ENCODE measurements at regions of chr11 and their contacts with region 1.

Region 1: DNA sequence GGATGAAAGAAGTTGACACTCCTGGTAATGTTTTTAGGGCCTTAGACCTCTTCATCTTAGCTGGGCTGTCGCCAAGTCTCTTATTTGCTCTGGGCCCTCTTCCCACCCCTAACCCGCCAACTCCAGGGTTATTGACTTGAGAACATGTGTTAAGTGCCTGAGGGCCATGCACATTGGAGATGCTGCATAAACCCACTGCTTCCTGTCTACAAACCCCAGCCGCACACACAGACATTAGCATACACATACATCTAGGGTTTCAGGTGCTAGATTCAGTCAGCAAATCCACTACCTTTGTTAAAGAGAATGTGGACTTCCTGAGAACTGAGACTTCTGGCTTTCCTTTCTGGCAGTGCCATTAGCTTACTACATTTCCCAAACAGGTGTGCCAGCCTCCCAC is 817 bp downstream of the PANX3 start:
- DNase-seq: peak in 5 of 35 experiments; percentile 1 to 25 (median 5)
- ATAC-seq: peak; percentile 58 to 80 (median 70)
- H3K4me3 ChIP-seq: no peak overlapping the region
- H3K4me3 Mint-ChIP-seq: no peak overlapping the region
- H3K27ac ChIP-seq: no peak overlapping the region
- H3K27ac Mint-ChIP-seq: peak overlapping the region in 1 of 2 donors; percentile 80
- H3K4me1 ChIP-seq: peaks cover 0 to 4% of the 10 kb centered on the region in 2 experiments
- H3K4me1 Mint-ChIP-seq: peaks cover 7 to 8% (median 8%) of the 10 kb centered on the region in 3 donors
- H3K27me3 ChIP-seq: no peaks in the 10 kb centered on the region
- H3K27me3 Mint-ChIP-seq: peaks cover 6 to 8% of the 10 kb centered on the region in 2 donors

Region 2: GRCh38 chr11:124481365-124482323 is 130.4 kb before region 1 on chr11:
- CTCF ChIA-PET with region 1: no interaction called
- POLR2A ChIA-PET with region 1: no interaction called
- DNase-seq: no peak
- ATAC-seq: peak in 3 of 4 experiments; percentile 37 to 50 (median 38)
- H3K4me3 ChIP-seq: peak overlapping the region in 1 of 2 donors; percentile 12
- H3K4me3 Mint-ChIP-seq: peak overlapping the region; percentile 19 to 51 (median 44)
- H3K27ac ChIP-seq: no peak overlapping the region
- H3K27ac Mint-ChIP-seq: peak overlapping the region in 1 of 2 donors; percentile 24
- H3K4me1 ChIP-seq: no peaks in the 10 kb centered on the region
- H3K4me1 Mint-ChIP-seq: peaks cover 9 to 12% (median 12%) of the 10 kb centered on the region in 3 donors
- H3K27me3 ChIP-seq: peaks cover 0 to 7% of the 10 kb centered on the region in 2 experiments
- H3K27me3 Mint-ChIP-seq: peaks cover 23 to 29% of the 10 kb centered on the region in 2 donors

Region 3: GRCh38 chr11:124622531-124623451 is 10.7 kb after region 1 on chr11 and contains the start of gene TBRG1:
- CTCF ChIA-PET with region 1: interaction called in 1 of 2 experiments, 10 read pairs
- POLR2A ChIA-PET with region 1: no interaction called
- DNase-seq: peak; percentile 55 to 91 (median 79)
- ATAC-seq: peak; percentile 96 to 99 (median 98)
- H3K4me3 ChIP-seq: peak within 1 kb of the TSS; percentile 84 to 90
- H3K4me3 Mint-ChIP-seq: peak within 1 kb of the TSS; percentile 95 to 99 (median 96)
- H3K27ac ChIP-seq: peak within 1 kb of the TSS; percentile 76
- H3K27ac Mint-ChIP-seq: peak within 1 kb of the TSS; percentile 98
- H3K4me1 ChIP-seq: peaks cover 17% of the 10 kb centered on the region in 2 experiments
- H3K4me1 Mint-ChIP-seq: peaks cover 40 to 48% (median 45%) of the 10 kb centered on the region in 3 donors
- H3K27me3 ChIP-seq: no peaks in the 10 kb centered on the region
- H3K27me3 Mint-ChIP-seq: peaks cover 10 to 13% of the 10 kb centered on the region in 2 donors
- total RNA-seq, gene TBRG1: 55.5 to 74.8 (median 72.0) TPM

Measured in T-cell (primary cell).